ENCODE measurements at regions of chr11 and their contacts with region 1.

Region 1: GRCh38 chr11:101456812-101457211 is 127.0 kb downstream of the TRPC6 start:
- DNase-seq: no peak
- ATAC-seq: no peak
- H3K4me3 ChIP-seq: no peak overlapping the region
- H3K27ac ChIP-seq: no peak overlapping the region
- H3K4me1 ChIP-seq: no peaks in the 10 kb centered on the region
- H3K27me3 ChIP-seq: no peaks in the 10 kb centered on the region
- CTCF ChIP-seq: peak; percentile 26

Region 2: GRCh38 chr11:101848262-101848661 is 391.4 kb after region 1 on chr11:
- intact Hi-C with region 1: loop called in 1 of 2 experiments (anchors 10 kb)
- DNase-seq: no peak
- ATAC-seq: no peak
- H3K4me3 ChIP-seq: no peak overlapping the region
- H3K27ac ChIP-seq: no peak overlapping the region
- H3K4me1 ChIP-seq: no peaks in the 10 kb centered on the region
- H3K27me3 ChIP-seq: no peaks in the 10 kb centered on the region
- CTCF ChIP-seq: peak; percentile 35